HepG2 (cell line): ENCODE measurements at regions of chr4 and their contacts with region 1.

Region 1: DNA sequence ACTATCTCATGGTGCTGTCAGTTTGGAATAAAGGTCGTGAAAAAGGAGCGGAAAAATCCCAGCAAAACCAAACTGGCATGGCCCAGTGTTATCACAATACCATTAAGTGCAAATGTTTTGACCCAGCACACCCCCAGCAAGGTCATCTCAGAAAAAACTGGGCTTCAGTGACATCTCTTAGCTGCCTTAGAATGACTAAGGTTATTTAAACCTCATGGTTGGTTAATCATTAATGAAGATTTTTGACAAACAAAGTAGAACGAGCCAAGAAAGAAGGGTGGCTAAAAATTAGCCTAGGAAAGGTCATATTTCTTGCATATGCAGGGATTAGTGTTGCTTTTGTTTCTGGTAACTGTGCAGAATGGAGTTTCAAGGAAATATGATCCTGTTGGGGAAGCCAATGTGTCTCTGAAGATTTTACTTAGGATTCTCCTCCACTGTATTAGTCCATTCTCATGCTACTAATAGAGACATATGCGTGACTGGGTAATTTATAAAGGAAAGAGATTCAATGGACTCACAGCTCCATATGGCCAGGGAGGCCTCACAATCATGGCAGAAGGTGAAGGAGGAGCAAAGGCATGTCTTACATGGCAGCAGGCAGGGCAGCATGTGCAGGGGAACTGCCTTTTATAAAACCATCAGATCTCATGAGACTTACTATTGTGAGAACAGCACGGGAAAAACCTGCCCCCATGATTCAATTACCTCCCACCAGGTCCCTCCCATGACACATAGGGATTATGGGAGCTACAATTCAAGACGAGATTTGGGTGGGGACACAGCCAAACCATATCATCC is 83.5 kb downstream of the CHRNA9 start:
- DNase-seq: peak; percentile 96
- ATAC-seq: peak; percentile 91
- H3K4me3 ChIP-seq: peak overlapping the region in 1 of 3 experiments; percentile 43; a peak in 2 of 6 replicates
- H3K27ac ChIP-seq: peak overlapping the region; percentile 82
- H3K4me1 ChIP-seq: peaks cover 59% of the 10 kb centered on the region
- H3K27me3 ChIP-seq: no peaks in the 10 kb centered on the region
- CTCF ChIP-seq: no peak
- EP300 ChIP-seq: peak in 1 of 2 experiments; percentile 86; a peak in 1 of 4 replicates
- POLR2A ChIP-seq: no peak
- RAD21 ChIP-seq: no peak

Region 2: GRCh38 chr4:40403081-40403480 is 15.5 kb before region 1 on chr4:
- CTCF ChIA-PET with region 1: no interaction called
- POLR2A ChIA-PET with region 1: interaction called, 13 read pairs
- in situ Hi-C with region 1: no loop called
- intact Hi-C with region 1: no loop called
- DNase-seq: peak; percentile 45
- ATAC-seq: peak; percentile 72
- H3K4me3 ChIP-seq: peak overlapping the region in 1 of 3 experiments; percentile 13; a peak in 1 of 6 replicates
- H3K27ac ChIP-seq: no peak overlapping the region
- H3K4me1 ChIP-seq: peaks cover 27% of the 10 kb centered on the region
- H3K27me3 ChIP-seq: 0 out of 5 replicates have a peak, but pooled peaks cover 0 to 3% of the 10 kb centered on the region in 2 experiments
- CTCF ChIP-seq: no peak
- EP300 ChIP-seq: peak in 1 of 2 experiments; percentile 58; a peak in 1 of 4 replicates
- POLR2A ChIP-seq: no peak
- RAD21 ChIP-seq: no peak

Region 3: GRCh38 chr4:40473578-40474388 is 55.2 kb after region 1 on chr4:
- CTCF ChIA-PET with region 1: no interaction called
- POLR2A ChIA-PET with region 1: no interaction called
- in situ Hi-C with region 1: no loop called
- intact Hi-C with region 1: loop called (anchors 5 kb)
- DNase-seq: peak; percentile 87
- ATAC-seq: peak; percentile 99
- H3K4me3 ChIP-seq: peak overlapping the region; percentile 31 to 55 (median 38); a peak in 3 of 6 replicates
- H3K27ac ChIP-seq: peak overlapping the region; percentile 57
- H3K4me1 ChIP-seq: peaks cover 36% of the 10 kb centered on the region
- H3K27me3 ChIP-seq: no peaks in the 10 kb centered on the region; a peak in 2 of 5 replicates
- CTCF ChIP-seq: no peak
- EP300 ChIP-seq: peak in 1 of 2 experiments; percentile 71; a peak in 1 of 4 replicates
- POLR2A ChIP-seq: no peak
- RAD21 ChIP-seq: no peak; the same call in 1 of the 2 replicates

Region 4: DNA sequence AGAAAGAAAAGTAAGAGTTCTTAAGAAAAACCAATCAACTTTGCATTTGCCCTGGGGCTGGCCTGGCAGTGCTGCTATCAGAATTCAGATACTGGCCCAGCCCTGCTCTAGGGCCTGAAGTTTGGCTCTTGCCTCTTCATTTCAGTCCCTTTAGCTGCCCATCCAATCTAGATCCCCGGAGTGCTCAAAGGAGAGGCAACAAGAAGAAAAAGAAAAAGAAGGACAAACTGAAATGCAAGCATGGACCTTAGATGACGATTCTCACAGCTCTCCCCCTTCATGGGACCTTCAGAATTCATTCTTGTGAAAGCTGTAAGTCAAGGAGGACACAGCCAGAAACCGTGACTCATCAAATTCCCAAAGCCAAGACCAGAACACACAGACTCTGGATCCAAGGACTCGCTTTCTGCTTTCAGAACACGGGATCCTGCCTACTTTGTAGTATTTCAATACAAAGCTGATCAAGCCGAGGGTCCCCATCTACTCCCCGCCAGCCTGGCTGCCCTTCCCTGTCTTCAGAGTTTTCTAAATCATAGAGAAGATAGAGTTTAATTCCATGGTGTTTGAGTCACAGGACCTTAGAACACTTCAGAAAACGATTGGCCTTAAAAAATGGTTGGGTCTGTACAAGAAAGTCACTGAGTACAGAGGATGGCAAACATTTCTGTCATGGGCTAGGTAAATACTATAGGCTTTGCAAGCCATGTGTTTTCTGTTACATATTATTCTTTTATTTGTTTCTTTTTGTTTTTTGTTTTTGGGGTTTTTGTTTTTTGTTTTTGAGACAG is 107.4 kb after region 1 on chr4:
- CTCF ChIA-PET with region 1: no interaction called
- POLR2A ChIA-PET with region 1: no interaction called
- in situ Hi-C with region 1: no loop called
- intact Hi-C with region 1: no loop called
- DNase-seq: no peak
- ATAC-seq: peak; percentile 56
- H3K4me3 ChIP-seq: no peak overlapping the region
- H3K27ac ChIP-seq: no peak overlapping the region
- H3K4me1 ChIP-seq: peaks cover 11% of the 10 kb centered on the region
- H3K27me3 ChIP-seq: no peaks in the 10 kb centered on the region
- CTCF ChIP-seq: no peak
- EP300 ChIP-seq: no peak
- POLR2A ChIP-seq: no peak
- RAD21 ChIP-seq: no peak

Region 5: DNA sequence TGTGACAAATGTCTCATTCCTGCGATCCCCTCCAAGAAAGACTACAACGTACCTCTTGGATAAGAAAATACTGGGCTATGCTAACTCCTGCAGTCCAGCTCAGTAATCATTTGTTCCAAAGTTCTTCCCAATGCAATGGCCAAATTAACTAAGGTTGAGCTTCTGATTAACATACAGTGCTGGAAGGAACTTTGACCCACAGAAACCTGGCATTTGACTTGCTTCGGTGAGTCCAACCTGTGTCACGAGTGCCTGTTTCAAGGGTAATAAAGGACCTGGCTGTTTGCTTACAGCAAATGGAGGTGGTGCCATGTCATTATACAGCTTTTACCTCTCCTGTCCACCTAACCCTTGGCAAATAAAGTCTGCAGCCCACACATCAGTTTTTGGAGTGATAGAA is 127.9 kb after region 1 on chr4:
- CTCF ChIA-PET with region 1: no interaction called
- POLR2A ChIA-PET with region 1: no interaction called
- in situ Hi-C with region 1: no loop called
- intact Hi-C with region 1: no loop called
- DNase-seq: peak; percentile 57
- ATAC-seq: peak; percentile 84
- H3K4me3 ChIP-seq: no peak overlapping the region
- H3K27ac ChIP-seq: no peak overlapping the region
- H3K4me1 ChIP-seq: peaks cover 35% of the 10 kb centered on the region
- H3K27me3 ChIP-seq: no peaks in the 10 kb centered on the region; a peak in 1 of 5 replicates
- CTCF ChIP-seq: no peak
- EP300 ChIP-seq: no peak
- POLR2A ChIP-seq: no peak
- RAD21 ChIP-seq: no peak